Ascending aorta (tissue), 2 donors: ENCODE measurements at regions of chr12 and their contacts with region 1.

Region 1: GRCh38 chr12:10268037-10268436 is 39.6 kb upstream of the KLRD1 start:
- DNase-seq: no peak
- H3K4me3 ChIP-seq: no peak overlapping the region
- H3K27ac ChIP-seq: no peak overlapping the region
- H3K4me1 ChIP-seq: no peaks in the 10 kb centered on the region
- H3K27me3 ChIP-seq: no peaks in the 10 kb centered on the region
- CTCF ChIP-seq: no peak

Region 2: GRCh38 chr12:10205251-10205807 is 62.7 kb before region 1 on chr12:
- intact Hi-C with region 1: no loop called
- DNase-seq: no peak
- H3K4me3 ChIP-seq: no peak overlapping the region
- H3K27ac ChIP-seq: no peak overlapping the region
- H3K4me1 ChIP-seq: no peaks in the 10 kb centered on the region
- H3K27me3 ChIP-seq: no peaks in the 10 kb centered on the region
- CTCF ChIP-seq: no peak

Region 3: GRCh38 chr12:10320643-10321042 is 52.6 kb after region 1 on chr12:
- intact Hi-C with region 1: loop called (anchors 10 kb)
- DNase-seq: no peak
- H3K4me3 ChIP-seq: no peak overlapping the region
- H3K27ac ChIP-seq: no peak overlapping the region
- H3K4me1 ChIP-seq: no peaks in the 10 kb centered on the region
- H3K27me3 ChIP-seq: no peaks in the 10 kb centered on the region
- CTCF ChIP-seq: no peak